Activated CD4-positive, alpha-beta memory T cell treated with anti-CD3 and anti-CD28 coated beads for 36 hours (primary cell): ENCODE measurements at regions of chr9 and their contacts with region 1.

Region 1: GRCh38 chr9:112012026-112012902 is 115.7 kb downstream of the UGCG start:
- DNase-seq: peak; percentile 49
- H3K4me3 Mint-ChIP-seq: no peak overlapping the region
- H3K27ac Mint-ChIP-seq: no peak overlapping the region
- H3K4me1 Mint-ChIP-seq: peaks cover 31% of the 10 kb centered on the region
- H3K27me3 Mint-ChIP-seq: peaks cover 25% of the 10 kb centered on the region

Region 2: DNA sequence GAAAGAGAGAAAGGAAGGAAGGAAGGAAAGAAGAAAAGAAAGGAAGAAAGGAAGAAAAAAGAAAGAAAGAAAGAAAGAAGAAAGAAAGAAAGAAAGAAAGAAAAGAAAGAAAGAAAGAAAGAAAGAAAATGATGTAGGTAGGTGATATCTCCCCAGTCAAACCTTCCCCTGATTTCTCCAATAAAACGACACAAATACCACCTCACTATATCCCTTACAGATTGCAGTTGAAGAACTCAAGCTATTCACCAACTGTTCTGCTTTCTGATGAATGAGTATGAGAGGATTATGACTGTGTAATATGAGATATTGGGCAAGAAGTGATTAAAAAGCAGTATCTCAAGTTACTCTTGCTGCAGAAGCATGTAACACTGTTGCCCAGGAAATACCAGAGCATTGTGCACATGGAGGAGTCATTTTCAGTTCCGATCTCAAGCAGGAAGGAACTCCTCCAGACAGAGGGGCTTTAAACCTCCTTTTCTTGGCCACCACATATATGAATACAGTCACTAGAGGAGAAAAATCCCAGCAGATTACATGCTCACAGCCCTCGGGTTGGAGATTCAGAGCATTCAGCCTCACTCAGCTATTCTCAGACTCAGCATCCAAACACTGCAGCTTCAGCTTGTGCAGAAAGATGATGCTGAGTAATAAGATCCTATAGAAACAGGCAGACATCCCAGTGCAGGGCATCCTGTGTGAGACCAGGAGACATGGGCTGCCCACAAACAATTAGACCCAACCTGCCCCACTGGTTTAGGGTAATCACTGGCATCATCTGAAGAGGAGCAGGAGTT is 54.2 kb before region 1 on chr9:
- CTCF ChIA-PET with region 1: no interaction called
- POLR2A ChIA-PET with region 1: no interaction called
- intact Hi-C with region 1: loop called (anchors 5 kb)
- DNase-seq: no peak
- H3K4me3 Mint-ChIP-seq: no peak overlapping the region
- H3K27ac Mint-ChIP-seq: no peak overlapping the region
- H3K4me1 Mint-ChIP-seq: peaks cover 14% of the 10 kb centered on the region
- H3K27me3 Mint-ChIP-seq: peaks cover 6% of the 10 kb centered on the region